ENCODE measurements at regions of chr2 and their contacts with region 1.

Region 1: GRCh38 chr2:195559431-195559914 is 97.6 kb upstream of the SLC39A10 start:
- DNase-seq: peak; percentile 29 to 92 (median 77)
- ATAC-seq: peak; percentile 94 to 98
- H3K4me3 Mint-ChIP-seq: peak overlapping the region; percentile 54 to 88 (median 78)
- H3K27ac Mint-ChIP-seq: peak overlapping the region; percentile 87 to 100 (median 94)
- H3K4me1 Mint-ChIP-seq: peaks cover 33 to 78% (median 61%) of the 10 kb centered on the region in 4 donors
- H3K27me3 Mint-ChIP-seq: no peaks in the 10 kb centered on the region

Region 2: GRCh38 chr2:195533771-195534642 is 25.5 kb before region 1 on chr2:
- POLR2A ChIA-PET with region 1: interaction called, 128 read pairs
- DNase-seq: peak in 8 of 10 donors; percentile 15 to 71 (median 44)
- ATAC-seq: peak; percentile 43 to 66
- H3K4me3 Mint-ChIP-seq: peak overlapping the region; percentile 69 to 92 (median 88)
- H3K27ac Mint-ChIP-seq: peak overlapping the region; percentile 84 to 100 (median 98)
- H3K4me1 Mint-ChIP-seq: peaks cover 33 to 85% (median 82%) of the 10 kb centered on the region in 4 donors
- H3K27me3 Mint-ChIP-seq: no peaks in the 10 kb centered on the region

Region 3: DNA sequence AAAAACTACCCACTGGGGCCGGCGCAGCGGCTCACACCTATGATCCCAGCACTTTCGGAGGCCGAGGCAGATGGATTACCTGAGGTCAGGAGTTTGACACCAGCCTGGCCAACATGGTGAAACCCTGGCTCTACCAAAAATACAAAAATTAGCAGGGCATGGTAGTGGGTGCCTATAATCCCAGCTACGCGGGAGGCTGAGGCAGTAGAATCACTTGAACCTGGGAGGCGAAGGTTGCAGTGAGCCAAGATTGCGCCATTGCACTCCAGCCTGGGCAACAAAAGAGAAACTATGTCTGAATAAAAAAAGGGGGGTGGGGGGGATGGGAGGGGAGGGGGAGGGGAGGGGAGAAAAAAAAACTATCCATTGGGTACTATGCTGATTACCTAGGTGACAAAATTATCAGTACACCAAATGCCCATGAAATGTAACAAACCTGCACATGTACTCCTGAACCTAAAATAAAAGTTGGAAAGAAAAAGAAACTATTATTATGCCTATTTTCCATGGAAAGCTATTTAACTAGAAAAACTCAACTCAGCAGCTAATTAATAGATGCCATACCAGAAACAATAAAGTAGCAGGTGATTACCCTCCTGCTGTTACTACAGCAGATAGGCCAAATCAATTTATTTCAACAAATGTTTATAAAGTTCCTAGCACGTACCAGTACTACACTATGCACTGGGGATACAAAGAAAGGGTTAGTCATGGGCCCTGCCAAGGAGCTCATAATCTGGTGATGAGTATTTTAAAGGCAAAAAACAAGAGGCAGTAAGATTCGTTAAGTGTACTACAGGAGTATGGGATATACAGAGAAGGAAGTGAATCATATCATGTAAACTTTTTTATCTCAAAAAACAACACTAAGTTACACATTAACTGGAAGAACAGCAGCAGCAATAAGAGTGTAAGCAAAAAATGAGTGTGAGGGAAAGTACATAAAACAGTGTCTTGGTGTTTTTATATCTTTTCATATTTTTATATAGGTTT is 15.3 kb before region 1 on chr2:
- POLR2A ChIA-PET with region 1: interaction called, 128 read pairs
- DNase-seq: no peak
- ATAC-seq: peak in 1 of 2 donors; percentile 20
- H3K4me3 Mint-ChIP-seq: peak overlapping the region in 4 of 10 donors; percentile 1 to 33 (median 17)
- H3K27ac Mint-ChIP-seq: peak overlapping the region in 7 of 10 donors; percentile 21 to 92 (median 56)
- H3K4me1 Mint-ChIP-seq: peaks cover 19 to 46% (median 44%) of the 10 kb centered on the region in 4 donors
- H3K27me3 Mint-ChIP-seq: no peaks in the 10 kb centered on the region

Region 4: GRCh38 chr2:195570329-195570728 is 10.9 kb after region 1 on chr2:
- POLR2A ChIA-PET with region 1: interaction called, 58 read pairs
- DNase-seq: no peak
- ATAC-seq: no peak
- H3K4me3 Mint-ChIP-seq: no peak overlapping the region
- H3K27ac Mint-ChIP-seq: peak overlapping the region in 4 of 10 donors; percentile 53 to 78 (median 58)
- H3K4me1 Mint-ChIP-seq: peaks cover 14 to 47% (median 42%) of the 10 kb centered on the region in 4 donors
- H3K27me3 Mint-ChIP-seq: no peaks in the 10 kb centered on the region

Region 5: DNA sequence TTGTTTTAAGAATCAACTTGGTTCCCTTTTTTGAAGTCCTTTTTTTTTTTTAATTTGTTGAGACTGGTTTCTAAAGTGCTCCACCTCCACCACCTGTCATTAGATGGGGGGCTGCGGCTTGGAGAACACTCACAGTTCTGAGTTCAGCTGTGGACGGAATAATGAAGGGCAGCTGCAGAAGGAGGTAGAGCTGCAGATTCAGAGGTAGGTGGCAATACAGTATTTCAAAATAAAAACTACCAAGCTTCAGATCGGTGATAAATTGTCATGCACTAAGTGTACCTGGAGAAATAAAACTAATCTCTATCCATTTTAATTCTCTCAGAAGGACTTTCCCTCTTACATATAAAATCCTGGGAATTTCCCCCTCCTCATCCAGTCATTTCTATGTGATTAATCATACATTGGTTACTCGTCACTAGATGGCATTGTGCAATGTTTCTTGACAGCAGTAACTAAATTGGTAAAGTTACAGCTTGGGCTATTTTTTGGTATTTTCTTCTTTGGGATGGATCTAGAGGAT is 16.5 kb after region 1 on chr2:
- POLR2A ChIA-PET with region 1: interaction called, 58 read pairs
- DNase-seq: peak in 6 of 10 donors; percentile 3 to 36 (median 22)
- ATAC-seq: peak; percentile 72 to 73
- H3K4me3 Mint-ChIP-seq: peak overlapping the region; percentile 43 to 77 (median 64)
- H3K27ac Mint-ChIP-seq: peak overlapping the region; percentile 47 to 94 (median 84)
- H3K4me1 Mint-ChIP-seq: peaks cover 30 to 71% (median 67%) of the 10 kb centered on the region in 4 donors
- H3K27me3 Mint-ChIP-seq: no peaks in the 10 kb centered on the region

Region 6: GRCh38 chr2:195601361-195601760 is 41.9 kb after region 1 on chr2:
- POLR2A ChIA-PET with region 1: no interaction called
- DNase-seq: no peak
- ATAC-seq: no peak
- H3K4me3 Mint-ChIP-seq: no peak overlapping the region
- H3K27ac Mint-ChIP-seq: peak overlapping the region in 6 of 10 donors; percentile 1 to 80 (median 16)
- H3K4me1 Mint-ChIP-seq: peaks cover 4 to 18% (median 12%) of the 10 kb centered on the region in 4 donors
- H3K27me3 Mint-ChIP-seq: no peaks in the 10 kb centered on the region

Region 7: GRCh38 chr2:196171248-196171871 is 611.9 kb after region 1 on chr2 and contains the start of gene STK17B:
- POLR2A ChIA-PET with region 1: no interaction called
- DNase-seq: peak; percentile 89 to 99 (median 96)
- ATAC-seq: peak; percentile 56 to 57
- H3K4me3 Mint-ChIP-seq: peak within 1 kb of the TSS; percentile 93 to 99 (median 96)
- H3K27ac Mint-ChIP-seq: peak within 1 kb of the TSS; percentile 94 to 99 (median 96)
- H3K4me1 Mint-ChIP-seq: peaks cover 26 to 51% (median 35%) of the 10 kb centered on the region in 4 donors
- H3K27me3 Mint-ChIP-seq: no peaks in the 10 kb centered on the region
- polyA plus RNA-seq, gene STK17B: 73.5 to 98.3 (median 91.9) TPM

Measured in naive thymus-derived CD8-positive, alpha-beta T cell (primary cell).